ENCODE measurements at regions of chr2 and their contacts with region 1.

Region 1: GRCh38 chr2:31333527-31334183 is 80.9 kb downstream of the XDH start:
- DNase-seq: peak; percentile 72 to 81
- ATAC-seq: peak; percentile 69 to 90 (median 82)
- H3K4me3 ChIP-seq: no peak overlapping the region
- H3K27ac ChIP-seq: no peak overlapping the region
- H3K4me1 ChIP-seq: peaks cover 0 to 23% (median 0%) of the 10 kb centered on the region in 9 donors
- H3K27me3 ChIP-seq: no peaks in the 10 kb centered on the region
- CTCF ChIP-seq: peak; percentile 82 to 98 (median 96)

Region 2: DNA sequence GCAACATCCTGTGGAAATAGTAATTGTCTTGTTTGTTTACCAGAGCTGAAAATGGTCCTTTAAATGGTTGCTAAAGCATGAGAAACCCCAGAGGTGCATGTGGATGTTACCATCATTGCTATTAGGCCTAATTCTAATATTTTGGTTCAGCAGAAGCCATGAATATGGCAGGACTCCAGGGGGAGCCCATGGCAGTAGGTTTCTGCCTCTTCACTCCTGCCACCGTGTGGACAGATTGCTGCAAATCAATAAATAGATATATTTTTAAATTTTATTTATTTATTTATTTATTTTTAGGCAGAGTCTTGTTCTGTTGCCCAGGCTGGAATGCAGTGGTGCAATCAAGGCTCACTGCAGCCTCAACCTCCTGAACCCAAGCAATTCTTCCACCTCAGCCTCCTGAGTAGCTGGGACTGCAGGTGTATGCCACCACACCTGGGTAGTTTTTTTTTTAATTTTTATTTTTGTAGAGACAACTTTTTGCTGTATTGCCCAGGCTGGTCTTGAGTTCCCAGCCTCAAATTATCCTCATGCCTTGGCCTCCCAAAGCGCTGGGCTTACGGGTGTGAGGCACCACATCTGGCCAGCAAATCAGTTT is 471.5 kb before region 1 on chr2:
- intact Hi-C with region 1: loop called in 3 of 10 experiments (anchors 5 to 10 kb)
- DNase-seq: peak in 1 of 2 donors; percentile 62
- ATAC-seq: peak in 2 of 8 donors; percentile 27 to 47
- H3K4me3 ChIP-seq: no peak overlapping the region
- H3K27ac ChIP-seq: no peak overlapping the region
- H3K4me1 ChIP-seq: peaks cover 0 to 13% (median 0%) of the 10 kb centered on the region in 9 donors
- H3K27me3 ChIP-seq: no peaks in the 10 kb centered on the region
- CTCF ChIP-seq: peak; percentile 35 to 83 (median 66)

Region 3: GRCh38 chr2:30871980-30872789 is 461.5 kb before region 1 on chr2:
- intact Hi-C with region 1: loop called in 3 of 10 experiments (anchors 10 kb)
- DNase-seq: peak in 1 of 2 donors; percentile 29
- ATAC-seq: peak in 7 of 8 donors; percentile 61 to 98 (median 86)
- H3K4me3 ChIP-seq: no peak overlapping the region
- H3K27ac ChIP-seq: peak overlapping the region in 1 of 10 donors; percentile 21
- H3K4me1 ChIP-seq: peaks cover 0 to 12% (median 0%) of the 10 kb centered on the region in 9 donors
- H3K27me3 ChIP-seq: no peaks in the 10 kb centered on the region
- CTCF ChIP-seq: no peak

Region 4: GRCh38 chr2:31170071-31170698 is 163.5 kb before region 1 on chr2:
- intact Hi-C with region 1: loop called in 9 of 10 experiments (anchors 2 to 10 kb)
- DNase-seq: peak; percentile 29 to 51
- ATAC-seq: peak in 7 of 8 donors; percentile 63 to 92 (median 83)
- H3K4me3 ChIP-seq: no peak overlapping the region
- H3K27ac ChIP-seq: no peak overlapping the region
- H3K4me1 ChIP-seq: no peaks in the 10 kb centered on the region
- H3K27me3 ChIP-seq: peaks cover 0 to 2% (median 0%) of the 10 kb centered on the region in 7 donors
- CTCF ChIP-seq: peak; percentile 83 to 93 (median 91)

Region 5: DNA sequence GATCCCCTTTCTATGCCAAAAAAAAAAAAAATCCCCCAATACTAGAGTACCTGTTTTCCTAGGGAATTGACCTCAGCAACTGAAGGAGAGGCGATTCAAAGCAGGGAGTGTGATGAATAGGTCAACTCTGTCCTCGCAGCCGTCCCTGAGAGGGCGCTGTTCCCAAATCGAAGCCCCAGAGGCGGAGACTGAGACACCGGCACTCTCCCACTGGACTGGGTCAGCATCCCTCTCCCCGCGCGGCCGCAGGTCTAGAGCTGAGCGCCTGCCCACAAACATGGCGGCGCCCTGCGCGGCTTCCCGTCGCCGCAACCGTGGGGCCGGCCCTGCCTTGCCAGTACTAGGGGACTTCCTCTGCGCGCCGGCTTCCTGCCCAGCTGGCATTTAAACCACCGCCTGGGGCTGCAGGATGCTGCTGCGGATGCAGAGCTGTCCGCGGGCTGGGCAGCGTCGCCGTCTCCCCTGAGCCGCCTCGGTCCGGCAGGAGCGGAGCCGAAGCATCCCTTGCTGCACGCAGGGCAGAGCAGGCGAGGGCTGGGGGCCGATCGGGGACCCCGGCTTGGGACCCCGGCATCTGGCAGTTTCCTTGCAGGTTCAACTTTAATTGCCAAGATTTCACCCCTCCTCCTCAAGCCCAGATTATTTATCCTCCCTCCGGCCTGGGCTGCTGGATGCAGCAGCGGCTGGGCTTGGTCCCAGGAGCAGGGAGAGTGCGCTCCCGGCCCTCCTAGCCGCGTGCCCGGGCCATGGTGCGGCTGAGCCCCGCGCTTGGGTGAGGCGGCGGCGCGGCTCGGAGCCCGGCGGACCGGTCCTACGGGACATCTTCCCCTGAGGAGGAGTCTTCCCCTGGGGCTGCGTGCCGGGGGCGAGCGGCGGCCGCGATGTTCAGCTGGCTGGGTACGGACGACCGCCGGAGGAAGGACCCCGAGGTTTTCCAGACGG is 99.6 kb before region 1 on chr2 and contains the start of gene EHD3:
- intact Hi-C with region 1: loop called in 7 of 10 experiments (anchors 2 to 5 kb)
- DNase-seq: peak; percentile 89 to 90
- ATAC-seq: peak; percentile 94 to 96 (median 95)
- H3K4me3 ChIP-seq: peak within 1 kb of the TSS; percentile 48 to 91 (median 70)
- H3K27ac ChIP-seq: peak within 1 kb of the TSS in 9 of 10 donors; percentile 48 to 96 (median 74)
- H3K4me1 ChIP-seq: peaks cover 6 to 68% (median 47%) of the 10 kb centered on the region in 9 donors
- H3K27me3 ChIP-seq: no peaks in the 10 kb centered on the region
- CTCF ChIP-seq: peak; percentile 42 to 83 (median 63)
- total RNA-seq, gene EHD3: 12.5 to 40.9 (median 26.5) TPM

Region 6: GRCh38 chr2:31270136-31270535 is 63.5 kb before region 1 on chr2:
- intact Hi-C with region 1: loop called in 1 of 10 experiments (anchors 5 kb)
- DNase-seq: no peak
- ATAC-seq: no peak
- H3K4me3 ChIP-seq: no peak overlapping the region
- H3K27ac ChIP-seq: peak overlapping the region in 1 of 10 donors; percentile 26
- H3K4me1 ChIP-seq: peaks cover 0 to 42% (median 11%) of the 10 kb centered on the region in 9 donors
- H3K27me3 ChIP-seq: no peaks in the 10 kb centered on the region
- CTCF ChIP-seq: no peak

Measured in heart right ventricle (tissue), 16 donors.